Activated CD4-positive, alpha-beta memory T cell treated with anti-CD3 and anti-CD28 coated beads for 36 hours (primary cell): ENCODE measurements at regions of chr12 and their contacts with region 1.

Region 1: GRCh38 chr12:95942524-95943329 is at the start of gene CCDC38:
- DNase-seq: peak; percentile 90
- H3K4me3 Mint-ChIP-seq: peak within 1 kb of the TSS; percentile 83
- H3K27ac Mint-ChIP-seq: peak within 1 kb of the TSS; percentile 86
- H3K4me1 Mint-ChIP-seq: peaks cover 10% of the 10 kb centered on the region
- H3K27me3 Mint-ChIP-seq: no peaks in the 10 kb centered on the region
- total RNA-seq, gene CCDC38: 0.24 TPM in 1 of 2 experiments, not detected in the other

Region 2: DNA sequence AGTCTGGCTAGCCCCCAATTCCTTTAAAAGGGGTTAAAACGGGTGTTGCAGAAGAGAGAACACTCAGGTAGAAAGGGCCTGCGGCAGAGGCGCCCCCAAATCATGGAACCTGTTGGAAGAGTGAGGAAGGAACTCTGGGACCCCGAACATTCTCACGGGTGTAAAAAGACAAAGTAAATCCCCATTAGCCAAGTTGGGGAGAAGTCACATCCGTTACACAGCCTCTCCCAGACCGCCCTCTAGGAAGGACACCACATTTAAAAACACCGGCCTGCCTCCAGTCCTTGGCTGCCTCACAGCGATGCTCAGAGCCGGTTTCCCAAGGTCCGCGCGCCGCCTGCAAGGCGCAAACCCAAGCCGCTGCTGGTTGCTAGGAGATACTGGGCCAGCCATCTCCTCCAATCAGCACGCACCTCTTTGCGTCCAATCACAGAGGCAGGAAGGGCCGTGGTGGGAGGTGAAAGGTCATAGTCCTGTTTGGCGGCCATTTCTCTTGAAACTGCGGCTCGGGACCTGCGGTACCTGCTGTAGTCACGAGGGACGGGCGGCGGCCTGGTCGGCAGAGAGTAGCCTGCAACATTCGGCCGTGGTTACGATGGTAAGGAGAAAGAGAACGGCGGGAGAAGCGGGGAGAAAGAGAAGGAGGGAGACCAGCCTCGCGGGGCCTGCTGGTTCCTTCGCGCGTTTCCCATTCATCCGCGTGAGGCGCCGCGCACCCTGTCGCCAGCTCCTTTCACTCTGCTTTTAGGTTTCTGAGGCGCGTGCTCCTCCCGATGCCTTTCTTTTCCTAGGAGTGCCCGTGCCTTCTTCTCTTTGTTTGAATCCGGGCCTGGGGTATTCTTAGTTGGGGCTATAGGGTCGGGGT is 84.0 kb before region 1 on chr12 and contains the start of gene SNRPF:
- CTCF ChIA-PET with region 1: interaction called, 3 read pairs
- POLR2A ChIA-PET with region 1: no interaction called
- intact Hi-C with region 1: loop called (anchors 1 kb)
- DNase-seq: peak; percentile 97
- H3K4me3 Mint-ChIP-seq: no peak within 1 kb of the TSS
- H3K27ac Mint-ChIP-seq: no peak within 1 kb of the TSS
- H3K4me1 Mint-ChIP-seq: peaks cover 38% of the 10 kb centered on the region
- H3K27me3 Mint-ChIP-seq: peaks cover 5% of the 10 kb centered on the region
- total RNA-seq, gene SNRPF: 45.4 to 46.0 TPM

Region 3: GRCh38 chr12:95918194-95918993 is 24.3 kb before region 1 on chr12:
- CTCF ChIA-PET with region 1: interaction called, 48 read pairs
- POLR2A ChIA-PET with region 1: no interaction called
- intact Hi-C with region 1: loop called (anchors 2 kb)
- DNase-seq: peak; percentile 58
- H3K4me3 Mint-ChIP-seq: no peak overlapping the region
- H3K27ac Mint-ChIP-seq: no peak overlapping the region
- H3K4me1 Mint-ChIP-seq: no peaks in the 10 kb centered on the region
- H3K27me3 Mint-ChIP-seq: peaks cover 2% of the 10 kb centered on the region

Region 4: DNA sequence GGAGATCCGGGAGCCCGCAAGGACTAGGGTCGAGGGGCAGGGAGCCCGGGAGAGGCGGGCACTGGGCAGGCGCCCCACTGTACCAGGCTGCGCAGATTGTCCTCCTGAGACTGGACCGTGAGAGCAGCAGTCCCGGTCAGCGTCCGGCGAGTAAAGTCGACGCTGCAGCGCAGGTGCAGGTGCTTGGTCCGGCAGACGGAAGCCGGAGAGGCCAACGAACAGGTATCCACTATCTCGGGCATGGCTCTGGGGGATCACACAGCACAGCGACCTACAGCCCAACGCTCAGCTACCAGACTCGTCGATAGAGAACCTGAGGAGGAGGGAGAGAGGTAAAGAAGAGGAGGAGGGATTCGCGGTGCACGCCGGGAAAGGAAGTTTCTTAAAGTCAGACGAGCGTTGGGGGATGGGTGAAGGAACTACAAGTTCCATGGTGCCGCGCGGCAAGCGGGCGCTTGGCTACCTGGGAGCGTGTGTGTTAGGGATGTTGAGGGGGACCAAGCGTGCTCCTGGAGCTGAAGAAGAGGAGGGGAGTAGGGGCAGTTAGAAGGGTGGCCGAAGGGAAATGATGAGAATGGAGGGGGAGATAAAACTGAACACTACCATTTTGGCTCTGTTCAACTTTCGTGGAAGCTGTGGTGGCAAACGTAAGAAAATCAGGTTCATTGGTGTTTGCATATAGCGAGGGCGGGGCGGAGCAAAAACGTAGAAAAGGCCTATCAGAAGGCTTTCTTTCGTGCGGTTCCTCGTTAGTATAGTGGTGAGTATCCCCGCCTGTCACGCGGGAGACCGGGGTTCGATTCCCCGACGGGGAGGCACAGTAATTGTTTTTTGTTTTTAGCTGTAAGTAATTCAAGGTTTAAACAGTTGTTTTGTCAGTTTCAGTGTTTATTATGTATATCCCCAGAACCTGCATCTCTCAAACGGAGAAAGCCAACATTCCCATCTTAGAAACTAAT is 92.8 kb after region 1 on chr12 and contains the start of gene LTA4H:
- CTCF ChIA-PET with region 1: no interaction called
- POLR2A ChIA-PET with region 1: interaction called, 5 read pairs
- intact Hi-C with region 1: loop called (anchors 1 kb)
- DNase-seq: peak; percentile 97
- H3K4me3 Mint-ChIP-seq: no peak within 1 kb of the TSS
- H3K27ac Mint-ChIP-seq: no peak within 1 kb of the TSS
- H3K4me1 Mint-ChIP-seq: peaks cover 13% of the 10 kb centered on the region
- H3K27me3 Mint-ChIP-seq: no peaks in the 10 kb centered on the region
- total RNA-seq, gene LTA4H: 106 to 110 TPM